HCT116 (cell line): ENCODE measurements at regions of chr1 and their contacts with region 1.

Region 1: GRCh38 chr1:41496080-41497055 is 11.9 kb upstream of the EDN2 start:
- DNase-seq: peak; percentile 73
- ATAC-seq: peak; percentile 69
- H3K4me3 ChIP-seq: peak overlapping the region; percentile 27 to 58
- H3K27ac ChIP-seq: peak overlapping the region; percentile 59
- H3K4me1 ChIP-seq: peaks cover 70 to 99% of the 10 kb centered on the region in 2 experiments
- H3K27me3 ChIP-seq: no peaks in the 10 kb centered on the region
- CTCF ChIP-seq: no peak
- POLR2A ChIP-seq: no peak
- RAD21 ChIP-seq: no peak

Region 2: DNA sequence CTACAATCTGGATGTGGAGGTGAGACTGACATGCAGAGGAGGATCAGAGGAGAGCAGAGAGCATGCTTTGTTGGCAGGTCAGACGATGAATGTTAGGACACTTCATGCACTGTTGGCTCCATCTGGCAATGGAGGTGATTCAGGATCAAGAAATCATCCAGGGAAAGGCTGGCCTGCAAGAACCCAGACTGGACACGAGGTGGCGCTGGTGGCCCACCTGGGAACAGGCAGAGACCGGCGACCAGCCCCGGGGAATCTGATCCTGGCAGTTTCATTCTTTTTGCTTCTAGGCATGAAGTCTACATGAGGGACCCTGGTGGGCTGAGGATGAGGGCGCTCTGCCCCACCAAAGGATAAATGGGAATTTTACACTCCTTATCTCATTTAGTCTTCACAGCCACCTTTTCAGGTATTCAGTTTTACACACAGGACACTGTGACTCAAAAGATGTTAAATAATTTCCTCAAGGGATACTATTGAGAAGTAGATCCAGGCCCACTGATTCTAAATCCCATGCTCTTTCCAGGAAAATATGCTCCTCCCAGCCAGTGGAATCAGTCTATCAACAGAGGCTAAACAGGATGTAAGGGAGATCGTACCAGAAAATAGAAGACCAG is 228.1 kb before region 1 on chr1:
- CTCF ChIA-PET with region 1: no interaction called
- POLR2A ChIA-PET with region 1: no interaction called
- RAD21 ChIA-PET with region 1: no interaction called
- intact Hi-C with region 1: loop called (anchors 5 kb)
- DNase-seq: peak; percentile 50
- ATAC-seq: peak; percentile 96
- H3K4me3 ChIP-seq: no peak overlapping the region
- H3K27ac ChIP-seq: no peak overlapping the region
- H3K4me1 ChIP-seq: peaks cover 0 to 2% of the 10 kb centered on the region in 2 experiments; a peak in 1 of 4 replicates
- H3K27me3 ChIP-seq: no peaks in the 10 kb centered on the region
- CTCF ChIP-seq: peak; percentile 89 to 96 (median 93)
- POLR2A ChIP-seq: no peak
- RAD21 ChIP-seq: peak; percentile 96

Region 3: GRCh38 chr1:41484372-41485241 is 11.8 kb before region 1 on chr1 and contains the start of gene EDN2:
- CTCF ChIA-PET with region 1: interaction called, 27 read pairs
- POLR2A ChIA-PET with region 1: interaction called, 3 read pairs
- RAD21 ChIA-PET with region 1: no interaction called
- intact Hi-C with region 1: no loop called
- DNase-seq: no peak
- ATAC-seq: peak; percentile 89
- H3K4me3 ChIP-seq: no peak within 1 kb of the TSS
- H3K27ac ChIP-seq: no peak within 1 kb of the TSS
- H3K4me1 ChIP-seq: peaks cover 34 to 50% of the 10 kb centered on the region in 2 experiments
- H3K27me3 ChIP-seq: no peaks in the 10 kb centered on the region
- CTCF ChIP-seq: peak in 2 of 3 experiments; percentile 48 to 67; a peak in 4 of 6 replicates
- POLR2A ChIP-seq: no peak
- RAD21 ChIP-seq: no peak
- total RNA-seq, gene EDN2: not detected

Region 4: DNA sequence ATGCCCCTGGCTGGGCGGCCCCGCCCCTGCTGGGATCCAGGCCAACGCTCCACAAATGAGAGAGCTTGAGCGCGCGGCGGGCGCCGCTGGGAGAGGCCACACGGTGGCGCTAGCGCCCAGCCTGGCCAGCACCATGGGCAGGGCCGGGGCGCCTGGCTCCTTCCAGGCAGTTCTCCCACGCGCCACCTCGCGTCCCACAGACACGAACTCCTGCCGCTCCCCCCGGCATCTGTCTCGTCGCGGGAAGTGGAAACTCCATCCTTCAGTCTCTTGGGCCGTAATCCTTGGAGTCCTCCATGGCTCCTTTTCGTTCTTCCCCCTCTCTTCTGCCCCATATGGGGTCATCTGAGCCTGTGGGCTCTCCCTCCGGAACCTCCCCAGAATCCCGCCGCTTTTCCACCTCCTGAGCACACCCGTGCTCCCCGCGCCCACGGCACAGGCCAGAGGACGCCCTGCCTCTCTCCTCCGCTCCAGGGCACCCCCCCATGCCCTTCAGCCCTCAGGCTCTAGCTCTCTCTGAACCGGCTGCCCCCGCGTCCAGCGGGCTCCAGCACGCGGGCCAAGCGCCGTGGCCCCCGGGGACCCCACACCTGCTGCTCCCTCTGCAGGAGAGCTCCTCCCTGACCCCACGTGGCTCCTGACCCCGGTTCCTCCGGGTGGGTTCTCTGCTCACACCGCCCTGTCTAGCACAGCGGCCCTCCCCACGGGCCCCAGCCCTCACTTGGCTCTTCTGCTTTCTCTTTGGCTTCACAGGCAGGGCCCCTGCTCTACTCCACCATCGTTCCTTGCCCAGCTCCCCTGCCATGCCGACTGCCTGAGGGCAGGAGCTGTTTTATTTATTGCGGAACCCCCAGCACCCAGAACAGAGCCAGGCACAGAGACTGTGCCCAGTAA is 20.0 kb after region 1 on chr1:
- CTCF ChIA-PET with region 1: interaction called, 15 read pairs
- POLR2A ChIA-PET with region 1: no interaction called
- RAD21 ChIA-PET with region 1: no interaction called
- intact Hi-C with region 1: no loop called
- DNase-seq: peak; percentile 67
- ATAC-seq: peak; percentile 97
- H3K4me3 ChIP-seq: no peak overlapping the region
- H3K27ac ChIP-seq: no peak overlapping the region
- H3K4me1 ChIP-seq: peaks cover 27 to 34% of the 10 kb centered on the region in 2 experiments
- H3K27me3 ChIP-seq: no peaks in the 10 kb centered on the region
- CTCF ChIP-seq: peak; percentile 80 to 94 (median 90)
- POLR2A ChIP-seq: no peak
- RAD21 ChIP-seq: peak; percentile 88